Activated CD4-positive, alpha-beta T cell treated with anti-CD3 and anti-CD28 coated beads for 36 hours (primary cell): ENCODE measurements at regions of chr1 and their contacts with region 1.

Region 1: GRCh38 chr1:9724706-9725476 is 73.4 kb downstream of the PIK3CD start:
- DNase-seq: peak; percentile 84
- ATAC-seq: peak; percentile 24
- H3K4me3 Mint-ChIP-seq: no peak overlapping the region
- H3K27ac Mint-ChIP-seq: no peak overlapping the region
- H3K4me1 Mint-ChIP-seq: peaks cover 61% of the 10 kb centered on the region
- H3K27me3 Mint-ChIP-seq: no peaks in the 10 kb centered on the region

Region 2: GRCh38 chr1:9689011-9689706 is 35.7 kb before region 1 on chr1:
- CTCF ChIA-PET with region 1: interaction called, 4 read pairs
- POLR2A ChIA-PET with region 1: no interaction called
- intact Hi-C with region 1: loop called in 1 of 2 experiments (anchors 5 kb)
- DNase-seq: peak; percentile 93
- ATAC-seq: peak; percentile 78
- H3K4me3 Mint-ChIP-seq: peak overlapping the region; percentile 70
- H3K27ac Mint-ChIP-seq: peak overlapping the region; percentile 77
- H3K4me1 Mint-ChIP-seq: peaks cover 70% of the 10 kb centered on the region
- H3K27me3 Mint-ChIP-seq: no peaks in the 10 kb centered on the region

Region 3: GRCh38 chr1:9701661-9702060 is 23.2 kb before region 1 on chr1:
- CTCF ChIA-PET with region 1: interaction called, 4 read pairs
- POLR2A ChIA-PET with region 1: no interaction called
- intact Hi-C with region 1: loop called in 1 of 2 experiments (anchors 1 kb)
- DNase-seq: no peak
- ATAC-seq: no peak
- H3K4me3 Mint-ChIP-seq: no peak overlapping the region
- H3K27ac Mint-ChIP-seq: no peak overlapping the region
- H3K4me1 Mint-ChIP-seq: peaks cover 65% of the 10 kb centered on the region
- H3K27me3 Mint-ChIP-seq: no peaks in the 10 kb centered on the region

Region 4: DNA sequence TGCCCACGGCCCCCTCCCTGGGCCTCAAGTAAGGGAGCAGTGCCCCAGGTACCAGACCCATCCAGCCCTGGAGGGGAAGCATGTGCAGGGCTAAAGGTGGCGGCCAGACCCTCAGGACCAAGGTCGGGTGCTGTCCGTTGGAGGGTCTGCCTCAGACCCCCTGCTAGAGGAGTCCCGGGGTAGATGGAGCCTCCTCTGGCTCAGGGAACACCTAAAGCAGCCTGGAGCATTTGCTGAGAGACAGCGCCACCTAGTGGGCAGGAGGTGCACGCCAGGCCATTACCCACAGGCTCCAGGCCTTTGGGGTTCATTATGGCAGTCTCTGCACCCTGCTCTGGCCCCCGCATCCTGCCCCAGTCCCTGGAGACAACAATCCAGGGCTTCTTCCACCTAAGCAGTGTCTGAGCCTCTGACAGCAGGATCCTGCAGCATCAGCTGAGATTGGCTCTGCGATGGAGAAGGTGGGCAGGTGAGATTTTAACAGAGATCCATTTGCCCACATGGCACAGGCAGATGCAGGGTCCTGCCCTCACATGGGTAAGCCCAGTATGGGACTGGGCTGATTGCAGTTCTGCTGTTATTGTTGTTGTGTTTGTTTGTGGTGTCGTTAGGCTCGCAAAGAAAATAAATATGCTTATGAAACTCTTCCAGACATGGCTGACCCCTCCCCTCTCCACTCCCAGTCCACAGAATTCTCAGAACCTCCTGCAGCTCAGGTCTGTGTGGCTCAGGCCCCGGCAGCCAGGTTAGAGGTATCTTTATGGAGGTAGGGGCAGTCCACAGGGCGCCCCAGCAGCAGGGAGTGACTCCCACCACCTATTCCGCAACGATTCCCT is 142.7 kb after region 1 on chr1:
- CTCF ChIA-PET with region 1: interaction called, 3 read pairs
- POLR2A ChIA-PET with region 1: no interaction called
- intact Hi-C with region 1: loop called (anchors 2 kb)
- DNase-seq: peak; percentile 93
- ATAC-seq: peak; percentile 99
- H3K4me3 Mint-ChIP-seq: no peak overlapping the region
- H3K27ac Mint-ChIP-seq: no peak overlapping the region
- H3K4me1 Mint-ChIP-seq: no peaks in the 10 kb centered on the region
- H3K27me3 Mint-ChIP-seq: no peaks in the 10 kb centered on the region

Region 5: DNA sequence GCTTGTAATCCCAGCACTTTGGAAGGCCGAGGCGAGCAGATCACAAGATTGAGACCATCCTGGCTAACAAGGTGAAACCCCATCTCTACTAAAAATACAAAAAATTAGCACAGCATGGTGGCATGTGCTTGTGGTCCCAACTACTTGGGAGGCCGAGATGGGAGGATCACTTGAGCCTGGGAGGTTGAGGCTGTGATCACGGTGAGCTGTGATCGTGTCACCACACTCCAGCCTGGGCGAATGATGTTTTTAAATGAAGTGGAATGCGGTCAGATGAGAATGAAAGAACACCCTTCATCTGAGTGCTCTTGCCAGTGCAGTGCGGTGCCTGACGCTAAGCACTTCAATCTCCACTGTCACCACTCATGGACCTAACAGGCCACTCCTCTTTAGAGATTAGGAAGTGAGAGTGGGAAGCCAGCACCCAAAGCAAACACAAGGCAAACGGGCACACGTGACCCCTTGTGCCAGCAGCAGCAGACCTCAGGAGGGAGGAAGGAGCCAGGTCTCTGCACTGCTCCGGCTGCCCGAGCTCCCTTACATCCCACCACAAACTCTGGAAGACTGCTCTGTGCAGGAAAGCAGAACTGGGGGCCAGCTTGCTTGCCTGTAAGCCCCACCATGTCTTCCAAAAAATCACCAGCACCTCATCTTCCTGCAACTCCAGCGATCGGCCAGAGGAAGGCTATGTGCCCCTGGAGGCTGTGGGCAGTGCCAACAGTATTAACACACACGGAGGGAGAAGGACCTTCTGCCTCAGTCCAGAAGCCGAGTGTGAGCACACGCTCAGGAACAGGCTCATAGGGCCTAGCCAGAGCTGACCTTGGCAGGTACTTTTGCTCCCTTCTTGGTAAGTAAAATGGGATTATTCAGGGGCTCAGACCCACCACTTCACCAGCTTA is 175.5 kb after region 1 on chr1:
- CTCF ChIA-PET with region 1: no interaction called
- POLR2A ChIA-PET with region 1: no interaction called
- intact Hi-C with region 1: loop called in 1 of 2 experiments (anchors 1 kb)
- DNase-seq: no peak
- ATAC-seq: no peak
- H3K4me3 Mint-ChIP-seq: no peak overlapping the region
- H3K27ac Mint-ChIP-seq: no peak overlapping the region
- H3K4me1 Mint-ChIP-seq: peaks cover 27% of the 10 kb centered on the region
- H3K27me3 Mint-ChIP-seq: no peaks in the 10 kb centered on the region